Activated CD8-positive, alpha-beta T cell treated with anti-CD3 and anti-CD28 coated beads, Interleukin-2, amount 10 ng/mL, durations not matched to agents 7 days and 5 days (primary cell): ENCODE measurements at regions of chr13 and their contacts with region 1.

Region 1: DNA sequence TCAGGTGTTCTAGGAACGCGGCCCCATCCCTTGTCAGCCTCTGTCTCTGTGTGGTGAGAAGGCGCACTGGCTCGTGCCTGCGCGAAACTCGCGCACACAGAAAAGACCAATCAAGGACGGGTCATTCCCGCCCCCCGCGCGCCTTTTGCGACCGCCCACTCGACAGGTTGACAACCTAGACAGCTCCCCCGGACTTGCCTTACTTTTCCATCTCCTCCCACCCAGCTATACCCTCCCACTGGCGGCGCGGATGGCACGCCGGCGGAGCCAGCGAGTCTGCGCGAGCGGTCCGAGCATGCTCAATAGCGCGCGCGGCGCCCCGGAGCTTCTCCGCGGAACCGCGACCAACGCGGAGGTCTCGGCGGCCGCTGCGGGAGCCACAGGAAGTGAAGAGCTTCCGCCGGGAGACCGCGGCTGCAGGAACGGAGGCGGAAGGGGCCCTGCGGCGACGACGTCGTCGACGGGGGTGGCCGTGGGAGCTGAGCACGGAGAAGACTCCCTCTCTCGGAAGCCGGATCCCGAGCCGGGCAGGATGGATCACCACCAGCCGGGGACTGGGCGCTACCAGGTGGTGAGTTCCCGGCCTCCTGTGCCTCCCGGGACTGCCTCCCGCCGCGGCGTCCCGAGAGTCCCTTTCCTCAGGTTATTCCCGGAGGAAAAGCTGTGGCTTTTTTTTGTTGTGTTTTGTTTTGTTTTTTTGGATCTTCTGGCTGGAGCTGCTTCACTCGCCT is at the start of gene NDFIP2:
- DNase-seq: peak; percentile 88
- ATAC-seq: peak; percentile 88
- H3K4me3 Mint-ChIP-seq: peak within 1 kb of the TSS; percentile 79
- H3K27ac Mint-ChIP-seq: peak within 1 kb of the TSS; percentile 77
- H3K4me1 Mint-ChIP-seq: peaks cover 58% of the 10 kb centered on the region
- H3K27me3 Mint-ChIP-seq: peaks cover 12% of the 10 kb centered on the region
- total RNA-seq, gene NDFIP2: 13.4 to 15.3 TPM

Region 2: DNA sequence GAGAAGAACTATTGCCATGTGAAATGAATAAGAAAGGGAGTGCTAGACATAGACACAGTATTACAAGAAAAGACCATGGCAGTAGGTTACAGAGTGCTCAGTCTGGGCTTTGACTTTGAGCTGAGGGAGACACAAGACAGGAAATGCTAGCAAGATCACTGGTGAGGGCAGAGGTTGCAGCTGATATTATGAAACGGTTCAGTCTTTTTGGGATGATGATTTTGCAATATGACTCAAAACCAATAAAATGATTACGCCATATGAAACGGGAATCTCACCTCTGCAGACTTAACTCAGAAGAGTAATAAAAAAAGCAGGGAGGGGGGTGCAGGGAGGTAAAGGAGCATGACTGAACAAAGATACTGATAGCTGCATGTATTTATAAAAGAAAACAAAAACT is 198.1 kb before region 1 on chr13:
- CTCF ChIA-PET with region 1: no interaction called
- POLR2A ChIA-PET with region 1: no interaction called
- DNase-seq: no peak
- ATAC-seq: no peak
- H3K4me3 Mint-ChIP-seq: no peak overlapping the region
- H3K27ac Mint-ChIP-seq: no peak overlapping the region
- H3K4me1 Mint-ChIP-seq: no peaks in the 10 kb centered on the region
- H3K27me3 Mint-ChIP-seq: no peaks in the 10 kb centered on the region

Region 3: DNA sequence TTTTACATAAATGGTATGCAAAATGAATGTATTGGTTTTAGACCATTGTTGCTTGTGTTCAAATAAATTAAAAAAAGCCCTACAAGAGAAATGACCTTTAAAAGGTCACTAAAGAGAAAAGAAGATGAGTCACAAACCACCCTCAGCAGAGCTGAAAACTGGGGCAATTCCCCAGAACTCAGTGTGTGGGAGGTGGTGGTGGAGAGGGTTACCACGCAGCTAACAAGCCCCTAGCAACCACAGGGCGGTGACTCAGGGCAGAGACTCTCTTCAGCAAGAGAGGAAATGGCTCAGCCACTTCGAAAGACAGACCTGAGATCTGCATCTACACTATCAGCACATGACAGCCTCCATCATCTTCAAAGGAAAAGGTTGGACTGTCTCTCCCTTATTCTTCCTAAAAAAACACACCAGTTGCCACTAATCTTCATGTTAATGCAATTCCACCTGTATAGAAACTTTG is 29.6 kb before region 1 on chr13:
- CTCF ChIA-PET with region 1: interaction called, 9 read pairs
- POLR2A ChIA-PET with region 1: interaction called, 16 read pairs
- DNase-seq: peak; percentile 93
- ATAC-seq: peak; percentile 99
- H3K4me3 Mint-ChIP-seq: peak overlapping the region; percentile 59
- H3K27ac Mint-ChIP-seq: peak overlapping the region; percentile 82
- H3K4me1 Mint-ChIP-seq: peaks cover 62% of the 10 kb centered on the region
- H3K27me3 Mint-ChIP-seq: no peaks in the 10 kb centered on the region

Region 4: DNA sequence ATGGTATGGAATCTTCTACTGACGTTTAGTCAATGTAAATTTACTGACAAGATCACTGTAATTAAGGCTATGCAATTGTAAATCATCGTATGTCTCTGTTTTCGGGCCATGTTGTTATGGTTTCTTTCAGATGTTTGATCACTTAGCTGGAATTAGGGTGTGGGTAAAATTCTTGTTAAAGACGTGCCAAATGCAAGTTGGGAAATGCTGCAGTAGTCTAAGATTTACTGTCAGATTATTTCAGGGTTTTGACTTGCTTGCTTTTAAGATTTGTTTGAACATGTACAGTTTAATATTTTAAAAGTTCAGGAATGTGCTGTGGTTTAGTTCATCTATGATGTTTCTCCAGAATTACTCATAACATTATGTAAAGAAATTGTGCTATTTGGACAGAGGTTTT is 10.6 kb after region 1 on chr13:
- CTCF ChIA-PET with region 1: interaction called, 35 read pairs
- POLR2A ChIA-PET with region 1: no interaction called
- DNase-seq: no peak
- ATAC-seq: no peak
- H3K4me3 Mint-ChIP-seq: no peak overlapping the region
- H3K27ac Mint-ChIP-seq: no peak overlapping the region
- H3K4me1 Mint-ChIP-seq: peaks cover 75% of the 10 kb centered on the region
- H3K27me3 Mint-ChIP-seq: no peaks in the 10 kb centered on the region

Region 5: DNA sequence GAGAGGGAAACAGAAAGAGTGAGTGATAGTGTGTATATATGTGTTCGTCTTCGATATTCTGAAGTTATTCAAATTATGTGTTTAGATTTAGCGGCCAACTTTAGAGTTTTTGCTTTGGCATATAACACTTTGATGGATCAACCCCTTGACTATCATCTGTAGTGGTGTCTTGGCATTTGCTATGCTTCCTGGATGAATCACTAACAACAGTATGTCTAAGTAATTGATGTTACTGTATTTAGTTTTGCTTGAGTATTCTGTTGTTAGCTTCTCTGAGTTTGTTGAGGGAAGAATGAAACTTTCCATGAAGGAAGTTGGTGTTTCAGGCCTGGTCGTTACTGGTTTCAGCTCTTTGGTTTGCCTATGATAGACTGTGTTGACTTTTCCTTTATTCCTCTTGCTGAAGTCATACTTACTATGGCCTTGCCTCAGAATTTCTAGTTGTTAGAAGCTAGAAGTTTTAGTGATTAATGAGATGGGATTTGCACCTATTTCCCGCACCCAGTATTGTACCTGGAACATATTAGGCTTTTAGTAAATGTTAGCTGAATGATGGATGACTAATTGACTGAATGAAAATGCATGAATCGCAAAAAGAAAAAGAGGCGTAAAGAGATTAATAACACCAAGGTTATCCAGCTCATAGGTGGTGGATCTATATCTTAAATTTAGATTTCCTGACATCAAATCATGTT is 20.6 kb after region 1 on chr13:
- CTCF ChIA-PET with region 1: interaction called, 25 read pairs
- POLR2A ChIA-PET with region 1: interaction called, 4 read pairs
- DNase-seq: no peak
- ATAC-seq: no peak
- H3K4me3 Mint-ChIP-seq: no peak overlapping the region
- H3K27ac Mint-ChIP-seq: no peak overlapping the region
- H3K4me1 Mint-ChIP-seq: peaks cover 54% of the 10 kb centered on the region
- H3K27me3 Mint-ChIP-seq: no peaks in the 10 kb centered on the region

Region 6: DNA sequence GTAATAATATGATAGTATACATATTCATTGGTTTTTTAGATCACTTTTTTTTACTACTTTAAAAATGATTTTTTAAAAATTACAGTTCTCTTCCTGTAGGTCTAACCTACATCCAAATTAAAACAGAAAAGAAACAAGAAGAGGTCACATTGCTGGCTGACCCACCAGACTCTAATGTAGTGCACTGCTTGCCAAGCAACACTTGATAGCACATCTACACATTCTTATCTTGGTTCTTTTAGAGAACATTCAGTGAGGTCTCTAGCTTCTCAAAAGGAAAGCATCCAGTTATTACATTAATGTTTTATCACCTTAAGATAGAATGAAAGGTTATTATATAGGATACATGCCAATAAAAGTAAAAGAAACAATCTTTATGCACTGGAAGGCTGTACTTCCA is 35.5 kb after region 1 on chr13:
- CTCF ChIA-PET with region 1: interaction called, 11 read pairs
- POLR2A ChIA-PET with region 1: interaction called, 9 read pairs
- DNase-seq: no peak
- ATAC-seq: no peak
- H3K4me3 Mint-ChIP-seq: no peak overlapping the region
- H3K27ac Mint-ChIP-seq: no peak overlapping the region
- H3K4me1 Mint-ChIP-seq: peaks cover 49% of the 10 kb centered on the region
- H3K27me3 Mint-ChIP-seq: no peaks in the 10 kb centered on the region

Region 7: DNA sequence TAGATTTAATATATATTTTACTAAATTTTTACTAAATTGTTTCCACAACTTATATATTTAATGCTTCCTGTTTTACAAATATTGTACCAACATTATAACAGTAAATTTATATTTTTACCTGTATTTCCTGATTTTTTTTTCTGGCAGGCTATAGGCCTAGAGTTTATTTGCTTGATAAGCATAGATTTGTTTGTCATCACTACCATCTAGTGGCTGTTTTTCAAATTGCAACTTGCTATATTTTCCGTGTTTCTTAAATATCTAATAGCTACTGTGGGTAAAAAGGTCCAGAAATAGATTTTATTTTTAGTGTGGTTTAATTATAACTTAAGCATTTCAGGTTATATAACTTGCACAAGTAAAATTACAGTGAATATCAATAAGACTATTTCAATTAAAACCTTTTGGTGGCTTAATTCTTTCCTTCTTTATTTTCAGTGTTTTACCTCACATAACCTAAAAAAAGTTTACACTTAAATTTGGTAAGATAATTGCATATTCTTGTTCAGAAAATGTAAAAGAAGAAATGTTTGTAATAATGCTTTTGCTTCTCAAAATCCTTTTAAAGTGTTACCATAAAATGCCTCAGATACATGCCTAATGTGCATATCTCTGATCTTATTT is 60.4 kb after region 1 on chr13:
- CTCF ChIA-PET with region 1: interaction called, 28 read pairs
- POLR2A ChIA-PET with region 1: interaction called, 3 read pairs
- DNase-seq: peak; percentile 30
- ATAC-seq: no peak
- H3K4me3 Mint-ChIP-seq: no peak overlapping the region
- H3K27ac Mint-ChIP-seq: no peak overlapping the region
- H3K4me1 Mint-ChIP-seq: peaks cover 3% of the 10 kb centered on the region
- H3K27me3 Mint-ChIP-seq: no peaks in the 10 kb centered on the region